Naive thymus-derived CD4-positive, alpha-beta T cell (primary cell): ENCODE measurements at regions of chr5 and their contacts with region 1.

Region 1: GRCh38 chr5:32261198-32261597 is 51.5 kb downstream of the MTMR12 start:
- DNase-seq: peak in 1 of 9 donors; percentile 32
- ATAC-seq: peak; percentile 38
- H3K4me3 ChIP-seq: no peak overlapping the region
- H3K4me3 Mint-ChIP-seq: no peak overlapping the region
- H3K27ac ChIP-seq: no peak overlapping the region
- H3K27ac Mint-ChIP-seq: peak overlapping the region in 6 of 9 donors; percentile 16 to 77 (median 46)
- H3K4me1 ChIP-seq: no peaks in the 10 kb centered on the region
- H3K4me1 Mint-ChIP-seq: peaks cover 0 to 18% (median 5%) of the 10 kb centered on the region in 7 donors
- H3K27me3 ChIP-seq: no peaks in the 10 kb centered on the region
- H3K27me3 Mint-ChIP-seq: no peaks in the 10 kb centered on the region

Region 2: DNA sequence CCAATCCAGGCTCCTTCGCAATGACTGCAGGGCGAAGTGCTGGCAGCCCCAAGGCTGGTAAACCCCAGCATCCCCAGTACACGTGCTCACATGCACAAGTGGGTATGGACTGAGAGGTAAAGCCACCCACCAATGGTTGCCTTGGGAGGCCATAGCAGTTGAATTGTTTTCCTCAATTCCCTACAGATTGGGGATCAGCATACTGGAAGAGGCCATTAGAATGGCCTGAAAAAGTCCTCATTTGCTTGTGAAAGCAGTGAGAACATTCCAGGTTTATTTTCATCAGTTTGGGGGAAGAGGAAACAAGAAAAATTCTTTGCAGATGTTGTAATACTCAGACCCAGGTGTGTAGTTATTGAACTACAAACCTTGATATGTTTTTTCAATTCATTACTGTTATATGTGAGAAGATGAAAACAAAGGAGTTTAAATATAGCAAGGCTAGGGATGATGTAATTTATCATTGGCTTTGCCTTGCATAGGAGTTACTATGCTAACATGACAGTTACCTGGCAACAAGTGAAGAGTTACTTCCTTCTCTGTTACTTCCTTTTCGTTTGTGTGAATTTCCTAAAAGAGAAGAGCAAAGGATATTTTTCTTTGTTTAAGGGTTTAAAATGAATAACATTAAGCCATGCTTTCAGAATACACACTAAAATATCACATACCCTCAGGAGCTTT is 15.1 kb after region 1 on chr5:
- CTCF ChIA-PET with region 1: no interaction called
- POLR2A ChIA-PET with region 1: no interaction called
- intact Hi-C with region 1: loop called in 1 of 2 experiments (anchors 2 kb)
- DNase-seq: peak in 5 of 9 donors; percentile 6 to 44 (median 33)
- ATAC-seq: peak; percentile 87
- H3K4me3 ChIP-seq: no peak overlapping the region
- H3K4me3 Mint-ChIP-seq: peak overlapping the region in 8 of 10 donors; percentile 15 to 57 (median 43)
- H3K27ac ChIP-seq: no peak overlapping the region
- H3K27ac Mint-ChIP-seq: peak overlapping the region; percentile 41 to 91 (median 75)
- H3K4me1 ChIP-seq: peaks cover 7 to 16% of the 10 kb centered on the region in 2 donors
- H3K4me1 Mint-ChIP-seq: peaks cover 15 to 54% (median 45%) of the 10 kb centered on the region in 7 donors
- H3K27me3 ChIP-seq: no peaks in the 10 kb centered on the region
- H3K27me3 Mint-ChIP-seq: no peaks in the 10 kb centered on the region

Region 3: DNA sequence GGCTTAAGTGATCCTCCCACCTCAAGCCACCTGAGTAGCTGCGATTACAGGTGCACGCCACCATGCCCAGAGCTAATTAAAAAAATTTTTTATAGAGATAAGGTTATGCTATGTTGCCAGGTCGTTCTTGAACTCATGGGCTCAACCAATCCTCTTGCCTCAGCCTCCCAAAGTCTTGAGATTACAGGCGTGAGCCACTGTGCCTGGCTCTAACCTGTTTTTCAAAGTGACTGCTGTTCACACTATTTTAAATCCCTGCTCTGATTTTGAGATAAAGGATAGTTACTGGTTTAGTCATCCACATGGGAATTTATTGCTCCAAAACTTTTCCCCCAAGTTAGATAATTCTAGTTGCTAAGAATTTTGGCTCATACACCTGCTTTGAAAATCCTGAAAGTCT is 99.7 kb after region 1 on chr5:
- CTCF ChIA-PET with region 1: no interaction called
- POLR2A ChIA-PET with region 1: no interaction called
- intact Hi-C with region 1: no loop called
- DNase-seq: no peak
- ATAC-seq: no peak
- H3K4me3 ChIP-seq: no peak overlapping the region
- H3K4me3 Mint-ChIP-seq: no peak overlapping the region
- H3K27ac ChIP-seq: no peak overlapping the region
- H3K27ac Mint-ChIP-seq: peak overlapping the region in 2 of 9 donors; percentile 4 to 51
- H3K4me1 ChIP-seq: no peaks in the 10 kb centered on the region
- H3K4me1 Mint-ChIP-seq: no peaks in the 10 kb centered on the region
- H3K27me3 ChIP-seq: no peaks in the 10 kb centered on the region
- H3K27me3 Mint-ChIP-seq: no peaks in the 10 kb centered on the region